Heart left ventricle (tissue), 16 donors: ENCODE measurements at regions of chr3 and their contacts with region 1.

Region 1: GRCh38 chr3:160956806-160957205 is 148.3 kb downstream of the B3GALNT1 start:
- DNase-seq: no peak
- ATAC-seq: peak in 2 of 4 donors; percentile 46 to 51
- H3K4me3 ChIP-seq: no peak overlapping the region
- H3K27ac ChIP-seq: no peak overlapping the region
- H3K4me1 ChIP-seq: peaks cover 0 to 20% (median 8%) of the 10 kb centered on the region in 12 donors
- H3K27me3 ChIP-seq: no peaks in the 10 kb centered on the region
- CTCF ChIP-seq: peak in 8 of 12 donors; percentile 5 to 35 (median 23)
- POLR2A ChIP-seq: no peak

Region 2: GRCh38 chr3:160765211-160765610 is 191.6 kb before region 1 on chr3:
- intact Hi-C with region 1: no loop called
- DNase-seq: no peak
- ATAC-seq: no peak
- H3K4me3 ChIP-seq: no peak overlapping the region
- H3K27ac ChIP-seq: peak overlapping the region in 1 of 12 donors; percentile 25
- H3K4me1 ChIP-seq: peaks cover 0 to 23% (median 0%) of the 10 kb centered on the region in 12 donors
- H3K27me3 ChIP-seq: no peaks in the 10 kb centered on the region
- CTCF ChIP-seq: no peak
- POLR2A ChIP-seq: no peak

Region 3: GRCh38 chr3:160999276-160999675 is 42.5 kb after region 1 on chr3:
- intact Hi-C with region 1: no loop called
- DNase-seq: no peak
- ATAC-seq: no peak
- H3K4me3 ChIP-seq: no peak overlapping the region
- H3K27ac ChIP-seq: no peak overlapping the region
- H3K4me1 ChIP-seq: no peaks in the 10 kb centered on the region
- H3K27me3 ChIP-seq: no peaks in the 10 kb centered on the region
- CTCF ChIP-seq: no peak
- POLR2A ChIP-seq: no peak

Region 4: DNA sequence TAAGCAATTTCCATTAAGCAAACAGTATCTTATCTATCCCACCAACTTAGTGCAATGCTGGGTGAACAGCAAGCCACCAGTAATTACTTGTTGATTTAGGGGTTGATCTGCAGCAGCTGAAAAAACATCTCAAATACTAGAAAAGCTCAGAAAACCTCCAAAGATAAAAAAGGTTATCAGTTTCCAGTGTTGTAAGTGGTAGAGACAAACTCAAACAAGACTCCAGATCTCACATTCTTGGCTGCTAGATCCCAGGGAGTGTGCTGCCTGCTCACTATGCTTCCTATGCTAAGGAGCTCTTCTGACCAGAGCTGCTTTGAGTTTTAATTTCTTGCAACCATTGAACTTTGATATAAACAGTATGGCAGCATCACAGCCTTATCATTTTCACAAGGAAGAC is 137.1 kb after region 1 on chr3:
- intact Hi-C with region 1: no loop called
- DNase-seq: no peak
- ATAC-seq: no peak
- H3K4me3 ChIP-seq: no peak overlapping the region
- H3K27ac ChIP-seq: no peak overlapping the region
- H3K4me1 ChIP-seq: peaks cover 0 to 50% (median 2%) of the 10 kb centered on the region in 12 donors
- H3K27me3 ChIP-seq: no peaks in the 10 kb centered on the region
- CTCF ChIP-seq: no peak
- POLR2A ChIP-seq: no peak

Region 5: DNA sequence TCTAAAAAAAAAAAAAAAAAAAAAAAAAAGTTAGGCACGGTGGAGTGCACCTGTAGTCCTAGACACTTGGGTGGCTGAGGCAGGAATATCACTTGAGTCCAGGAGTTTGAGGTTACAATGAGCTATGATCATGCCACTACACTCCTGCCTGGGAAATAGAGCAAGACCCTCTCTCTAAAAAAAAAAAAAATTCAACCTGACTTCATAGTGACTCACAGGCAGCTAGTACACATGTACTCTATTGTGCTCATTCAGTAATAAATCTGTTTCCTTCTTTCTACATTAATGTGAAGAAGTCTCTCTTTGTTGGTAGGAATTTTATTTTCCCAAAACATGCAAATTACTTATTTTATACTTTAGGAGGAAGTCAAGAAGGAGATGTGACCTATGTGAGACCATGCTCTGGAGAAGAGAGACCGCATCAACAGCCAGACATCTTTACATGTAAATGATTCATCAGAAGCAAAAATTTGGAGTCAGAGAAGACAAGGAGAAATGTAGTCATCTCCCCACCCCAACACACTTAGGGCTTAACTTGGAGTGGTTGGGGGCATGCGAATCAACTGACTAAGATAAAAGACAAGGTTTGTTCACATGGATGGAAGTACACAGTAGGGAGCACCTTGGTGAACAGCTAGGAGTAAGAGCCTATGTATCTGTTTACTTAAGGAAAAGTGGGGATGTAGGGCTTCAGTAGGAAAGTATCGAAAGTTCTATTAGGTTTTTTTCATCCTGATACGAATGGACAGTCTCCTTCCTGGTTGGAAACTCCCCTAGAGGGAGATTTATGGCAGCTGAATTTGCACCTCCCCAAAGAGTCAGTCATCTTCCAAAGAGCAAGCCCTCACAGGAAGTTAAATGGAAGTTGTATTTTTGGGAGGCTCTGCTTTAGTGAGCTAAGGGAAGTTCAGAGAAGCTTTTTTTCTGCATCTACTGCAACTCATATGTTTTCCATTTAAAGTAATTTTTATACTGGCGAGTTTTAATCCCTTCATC is 241.3 kb after region 1 on chr3:
- intact Hi-C with region 1: loop called in 1 of 10 experiments (anchors 5 kb)
- DNase-seq: no peak
- ATAC-seq: no peak
- H3K4me3 ChIP-seq: no peak overlapping the region
- H3K27ac ChIP-seq: no peak overlapping the region
- H3K4me1 ChIP-seq: no peaks in the 10 kb centered on the region
- H3K27me3 ChIP-seq: no peaks in the 10 kb centered on the region
- CTCF ChIP-seq: no peak
- POLR2A ChIP-seq: no peak

Region 6: DNA sequence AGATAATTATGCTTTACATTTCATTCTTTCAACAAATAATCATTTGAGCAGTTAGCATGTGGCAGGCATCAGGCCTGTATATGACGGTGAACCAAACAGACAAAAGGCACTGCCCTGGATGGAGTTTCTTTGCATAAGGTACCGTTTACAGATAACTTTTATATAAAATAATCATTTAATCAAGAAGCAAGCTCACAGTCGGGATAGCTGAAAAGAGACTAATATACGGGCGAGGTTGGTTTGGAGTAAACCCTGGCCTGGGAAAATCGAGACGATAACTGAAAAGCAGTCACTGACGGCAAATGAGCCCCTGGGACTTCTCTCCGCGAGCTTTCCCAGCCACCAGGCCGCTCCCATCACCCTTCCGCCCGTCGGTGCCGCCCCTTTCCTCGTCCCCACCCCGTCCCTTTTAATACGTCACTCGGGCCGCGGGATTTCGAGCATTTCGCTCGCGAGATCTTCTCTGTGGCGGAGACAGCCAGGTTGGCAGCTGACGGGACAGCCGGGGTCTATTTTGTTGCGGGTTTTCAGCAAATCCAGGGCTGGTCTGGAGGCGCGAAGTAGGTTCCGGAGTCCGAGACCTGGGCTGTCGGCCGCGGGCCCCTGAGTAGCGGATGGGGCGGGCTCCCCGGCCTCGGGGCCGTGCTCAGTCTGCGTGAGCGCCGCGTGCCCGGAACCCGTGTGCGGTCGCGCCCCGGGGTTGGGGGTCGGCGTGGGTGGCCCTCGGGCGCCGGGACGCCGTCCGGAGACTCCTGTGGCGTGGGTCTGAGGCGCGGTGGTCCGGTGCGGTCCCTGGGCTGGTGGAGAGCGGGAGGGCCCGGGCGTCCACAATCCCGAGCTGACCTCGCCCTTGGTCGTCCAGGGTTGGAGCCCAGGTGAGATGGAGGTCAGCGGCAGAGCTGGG is 264.3 kb after region 1 on chr3 and contains the start of gene NMD3:
- intact Hi-C with region 1: loop called in 1 of 10 experiments (anchors 10 kb)
- DNase-seq: peak; percentile 96 to 97 (median 97)
- ATAC-seq: peak; percentile 97 to 98 (median 98)
- H3K4me3 ChIP-seq: peak within 1 kb of the TSS; percentile 66 to 96 (median 80)
- H3K27ac ChIP-seq: peak within 1 kb of the TSS; percentile 82 to 99 (median 91)
- H3K4me1 ChIP-seq: peaks cover 6 to 49% (median 35%) of the 10 kb centered on the region in 12 donors
- H3K27me3 ChIP-seq: no peaks in the 10 kb centered on the region
- CTCF ChIP-seq: peak in 1 of 12 donors; percentile 1
- POLR2A ChIP-seq: peak; percentile 79 to 92
- total RNA-seq, gene NMD3: 28.9 to 74.9 (median 57.6) TPM